Colonic mucosa (tissue), 4 donors: ENCODE measurements at regions of chr22 and their contacts with region 1.

Region 1: GRCh38 chr22:36856121-36856791 is 4.5 kb upstream of the NCF4 start:
- DNase-seq: peak; percentile 92
- H3K4me3 ChIP-seq: no peak overlapping the region
- H3K27ac ChIP-seq: no peak overlapping the region
- H3K4me1 ChIP-seq: no peaks in the 10 kb centered on the region
- H3K27me3 ChIP-seq: no peaks in the 10 kb centered on the region
- CTCF ChIP-seq: peak; percentile 100

Region 2: GRCh38 chr22:36520423-36520822 is 335.8 kb before region 1 on chr22:
- intact Hi-C with region 1: no loop called
- DNase-seq: no peak
- H3K4me3 ChIP-seq: no peak overlapping the region
- H3K27ac ChIP-seq: no peak overlapping the region
- H3K4me1 ChIP-seq: no peaks in the 10 kb centered on the region
- H3K27me3 ChIP-seq: no peaks in the 10 kb centered on the region
- CTCF ChIP-seq: no peak

Region 3: GRCh38 chr22:36546092-36546804 is 310.0 kb before region 1 on chr22:
- intact Hi-C with region 1: loop called (anchors 5 kb)
- DNase-seq: no peak
- H3K4me3 ChIP-seq: no peak overlapping the region
- H3K27ac ChIP-seq: no peak overlapping the region
- H3K4me1 ChIP-seq: no peaks in the 10 kb centered on the region
- H3K27me3 ChIP-seq: no peaks in the 10 kb centered on the region
- CTCF ChIP-seq: peak; percentile 37

Region 4: GRCh38 chr22:36781656-36782627 is 74.3 kb before region 1 on chr22:
- intact Hi-C with region 1: loop called (anchors 5 kb)
- DNase-seq: peak; percentile 85
- H3K4me3 ChIP-seq: no peak overlapping the region
- H3K27ac ChIP-seq: no peak overlapping the region
- H3K4me1 ChIP-seq: no peaks in the 10 kb centered on the region
- H3K27me3 ChIP-seq: no peaks in the 10 kb centered on the region
- CTCF ChIP-seq: peak; percentile 93

Region 5: GRCh38 chr22:36977947-36978660 is 121.8 kb after region 1 on chr22:
- intact Hi-C with region 1: loop called (anchors 10 kb)
- DNase-seq: peak; percentile 92
- H3K4me3 ChIP-seq: peak overlapping the region; percentile 8
- H3K27ac ChIP-seq: no peak overlapping the region
- H3K4me1 ChIP-seq: no peaks in the 10 kb centered on the region
- H3K27me3 ChIP-seq: no peaks in the 10 kb centered on the region
- CTCF ChIP-seq: peak; percentile 88

Region 6: DNA sequence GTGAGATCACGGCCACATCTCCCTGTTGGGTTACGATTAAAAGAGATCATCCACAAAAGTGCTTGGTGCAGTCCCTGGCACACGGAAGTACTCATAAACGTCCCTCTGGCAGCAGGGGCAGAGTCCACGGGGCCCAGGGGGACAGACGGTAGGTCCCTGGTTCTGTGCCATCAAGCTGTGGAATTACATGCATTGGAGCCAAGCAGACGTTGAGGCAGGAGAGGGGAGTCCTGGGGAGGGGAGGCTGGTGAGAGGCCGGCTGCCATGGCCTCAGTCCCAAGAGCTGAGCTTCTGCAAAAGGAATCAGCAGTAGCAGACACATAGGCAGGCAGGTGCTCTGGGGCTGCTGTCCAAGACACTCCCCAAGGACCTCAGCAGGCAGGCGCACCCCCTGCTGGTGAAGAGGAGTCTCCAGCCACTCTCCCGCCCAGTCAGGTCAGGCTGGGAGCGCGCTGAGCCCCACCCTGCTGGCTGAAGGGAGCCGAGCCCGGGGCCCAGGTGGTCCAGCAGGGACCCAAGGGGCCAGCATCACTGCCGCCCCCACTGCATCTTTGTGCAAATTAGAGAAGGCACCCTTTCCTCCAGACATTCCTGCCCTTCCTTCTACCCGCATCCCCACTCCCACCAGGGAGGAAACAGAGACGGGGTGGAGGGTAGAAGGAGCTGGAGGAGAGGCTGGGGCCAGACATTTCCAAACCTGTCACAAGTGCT is 187.7 kb after region 1 on chr22:
- intact Hi-C with region 1: loop called (anchors 10 kb)
- DNase-seq: peak; percentile 90
- H3K4me3 ChIP-seq: no peak overlapping the region
- H3K27ac ChIP-seq: peak overlapping the region; percentile 91
- H3K4me1 ChIP-seq: peaks cover 7% of the 10 kb centered on the region
- H3K27me3 ChIP-seq: no peaks in the 10 kb centered on the region
- CTCF ChIP-seq: peak; percentile 78